Mammary epithelial cell (primary cell): ENCODE measurements at regions of chr9 and their contacts with region 1.

Region 1: GRCh38 chr9:130578865-130579737 is at the start of gene FUBP3:
- DNase-seq: peak; percentile 87
- H3K4me3 ChIP-seq: peak within 1 kb of the TSS; percentile 94 to 98 (median 95)
- H3K27ac ChIP-seq: peak within 1 kb of the TSS; percentile 83
- H3K4me1 ChIP-seq: peaks cover 15% of the 10 kb centered on the region
- H3K27me3 ChIP-seq: no peaks in the 10 kb centered on the region
- CTCF ChIP-seq: no peak
- total RNA-seq, gene FUBP3: 42.8 to 62.5 TPM

Region 2: DNA sequence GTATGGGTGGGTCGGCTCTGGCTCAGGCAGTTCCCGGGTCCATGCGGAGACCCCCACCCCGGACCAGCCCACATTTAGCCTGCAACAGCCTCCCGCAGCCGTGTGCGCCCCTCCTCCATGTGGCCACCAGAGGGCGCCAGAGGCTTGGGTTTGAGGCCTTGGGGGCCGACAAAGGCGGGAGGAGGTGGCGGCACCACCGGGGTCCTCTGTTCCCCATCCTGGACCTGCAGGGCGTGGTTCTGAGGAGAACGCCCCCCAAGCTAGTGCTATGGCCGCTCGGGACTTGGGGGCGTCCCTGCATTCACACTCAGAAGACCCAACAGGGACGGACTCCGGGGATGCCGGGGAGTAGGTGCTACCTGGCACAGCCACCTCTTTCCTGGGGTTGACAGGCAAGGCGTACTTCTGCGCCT is 117.9 kb before region 1 on chr9:
- CTCF ChIA-PET with region 1: no interaction called
- dilution Hi-C with region 1: no loop called
- in situ Hi-C with region 1: no loop called
- intact Hi-C with region 1: loop called (anchors 5 kb)
- DNase-seq: peak; percentile 16
- H3K4me3 ChIP-seq: no peak overlapping the region
- H3K27ac ChIP-seq: no peak overlapping the region
- H3K4me1 ChIP-seq: no peaks in the 10 kb centered on the region
- H3K27me3 ChIP-seq: no peaks in the 10 kb centered on the region
- CTCF ChIP-seq: peak; percentile 53 to 81

Region 3: DNA sequence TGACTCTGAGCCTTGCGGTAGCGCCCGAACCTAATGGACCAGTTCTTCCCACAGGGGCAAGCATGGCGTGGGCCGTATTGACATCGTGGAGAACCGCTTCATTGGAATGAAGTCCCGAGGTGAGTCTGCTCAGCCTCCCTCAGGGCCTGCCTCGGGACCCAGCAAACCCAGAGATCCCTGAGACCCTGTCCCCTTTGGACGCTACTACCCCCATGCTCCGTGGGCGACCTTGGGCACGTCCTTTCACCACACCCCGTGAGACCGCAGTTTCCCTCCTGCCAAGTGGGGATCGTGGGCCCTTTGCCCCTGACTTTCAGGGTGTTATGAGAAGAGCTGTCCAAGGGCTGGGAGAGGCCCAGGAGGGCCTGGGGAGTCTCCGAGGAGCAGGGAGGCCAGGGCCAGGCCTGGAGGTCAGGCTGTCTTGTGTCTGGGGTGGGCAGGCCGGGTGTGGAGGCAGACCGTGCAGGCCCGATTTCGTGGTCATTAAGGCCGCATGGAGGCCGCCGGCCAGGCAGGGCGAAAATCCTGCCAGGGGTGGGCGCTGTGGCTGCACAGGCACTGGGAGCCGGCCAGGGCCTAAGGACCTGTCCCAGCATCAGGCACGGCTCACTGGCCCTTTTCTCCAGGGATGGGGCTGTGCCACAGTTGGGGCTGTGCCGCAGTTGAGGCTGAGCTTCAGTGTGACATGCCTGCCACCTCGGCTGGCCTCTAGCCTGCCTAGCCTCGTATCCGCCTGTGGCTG is 98.6 kb before region 1 on chr9:
- CTCF ChIA-PET with region 1: no interaction called
- dilution Hi-C with region 1: no loop called
- in situ Hi-C with region 1: loop called in 1 of 2 experiments (anchors 25 kb)
- intact Hi-C with region 1: no loop called
- DNase-seq: no peak
- H3K4me3 ChIP-seq: no peak overlapping the region
- H3K27ac ChIP-seq: no peak overlapping the region
- H3K4me1 ChIP-seq: no peaks in the 10 kb centered on the region
- H3K27me3 ChIP-seq: no peaks in the 10 kb centered on the region
- CTCF ChIP-seq: peak in 1 of 2 donors; percentile 30

Region 4: GRCh38 chr9:130541533-130541932 is 37.6 kb before region 1 on chr9:
- CTCF ChIA-PET with region 1: no interaction called
- dilution Hi-C with region 1: no loop called
- in situ Hi-C with region 1: no loop called
- intact Hi-C with region 1: loop called (anchors 1 kb)
- DNase-seq: no peak
- H3K4me3 ChIP-seq: no peak overlapping the region
- H3K27ac ChIP-seq: no peak overlapping the region
- H3K4me1 ChIP-seq: peaks cover 17% of the 10 kb centered on the region
- H3K27me3 ChIP-seq: no peaks in the 10 kb centered on the region
- CTCF ChIP-seq: no peak

Region 5: DNA sequence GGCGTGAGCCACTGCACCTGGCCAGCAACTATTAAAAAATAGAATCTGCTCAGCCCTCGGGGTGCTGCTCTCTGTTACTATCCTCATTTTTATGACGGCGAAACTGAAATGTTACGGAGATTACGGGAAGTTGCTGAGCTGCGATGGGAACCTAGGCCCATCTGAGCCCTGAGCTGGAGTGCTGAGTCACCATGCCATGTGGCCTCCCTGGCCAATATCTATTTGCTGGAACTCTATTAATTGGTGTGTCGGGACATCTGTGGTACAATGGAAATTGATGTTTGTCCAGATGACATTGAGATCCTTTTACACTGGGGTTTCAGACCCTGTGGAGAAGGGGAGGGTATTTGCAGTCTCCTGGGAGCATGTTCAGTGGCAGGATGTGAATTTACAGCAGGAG is 93.4 kb after region 1 on chr9:
- CTCF ChIA-PET with region 1: no interaction called
- dilution Hi-C with region 1: no loop called
- in situ Hi-C with region 1: no loop called
- intact Hi-C with region 1: no loop called
- DNase-seq: no peak
- H3K4me3 ChIP-seq: no peak overlapping the region
- H3K27ac ChIP-seq: no peak overlapping the region
- H3K4me1 ChIP-seq: no peaks in the 10 kb centered on the region
- H3K27me3 ChIP-seq: no peaks in the 10 kb centered on the region
- CTCF ChIP-seq: no peak

Region 6: GRCh38 chr9:130689937-130690700 is 111.0 kb after region 1 on chr9:
- CTCF ChIA-PET with region 1: no interaction called
- dilution Hi-C with region 1: loop called (anchors 5 kb)
- in situ Hi-C with region 1: no loop called
- intact Hi-C with region 1: no loop called
- DNase-seq: peak; percentile 98
- H3K4me3 ChIP-seq: peak overlapping the region; percentile 52 to 61 (median 59)
- H3K27ac ChIP-seq: peak overlapping the region; percentile 38
- H3K4me1 ChIP-seq: peaks cover 15% of the 10 kb centered on the region
- H3K27me3 ChIP-seq: no peaks in the 10 kb centered on the region
- CTCF ChIP-seq: no peak